MCF 10A (cell line): ENCODE measurements at regions of chr14 and their contacts with region 1.

Region 1: GRCh38 chr14:103910262-103910935 is 17.9 kb upstream of the TDRD9 start:
- DNase-seq: peak; percentile 96
- H3K4me3 Mint-ChIP-seq: peak overlapping the region; percentile 32
- H3K27ac Mint-ChIP-seq: no peak overlapping the region
- H3K4me1 Mint-ChIP-seq: peaks cover 7% of the 10 kb centered on the region
- H3K27me3 Mint-ChIP-seq: no peaks in the 10 kb centered on the region
- CTCF ChIP-seq: peak; percentile 88

Region 2: GRCh38 chr14:103483600-103483999 is 426.8 kb before region 1 on chr14:
- CTCF ChIA-PET with region 1: no interaction called
- POLR2A ChIA-PET with region 1: no interaction called
- intact Hi-C with region 1: no loop called
- DNase-seq: peak; percentile 97
- H3K4me3 Mint-ChIP-seq: no peak overlapping the region
- H3K27ac Mint-ChIP-seq: peak overlapping the region; percentile 42
- H3K4me1 Mint-ChIP-seq: peaks cover 14% of the 10 kb centered on the region
- H3K27me3 Mint-ChIP-seq: no peaks in the 10 kb centered on the region
- CTCF ChIP-seq: no peak

Region 3: GRCh38 chr14:103576371-103577024 is 333.9 kb before region 1 on chr14:
- CTCF ChIA-PET with region 1: interaction called, 3 read pairs
- POLR2A ChIA-PET with region 1: no interaction called
- intact Hi-C with region 1: loop called (anchors 1 kb)
- DNase-seq: peak; percentile 91
- H3K4me3 Mint-ChIP-seq: peak overlapping the region; percentile 13
- H3K27ac Mint-ChIP-seq: peak overlapping the region; percentile 82
- H3K4me1 Mint-ChIP-seq: peaks cover 17% of the 10 kb centered on the region
- H3K27me3 Mint-ChIP-seq: no peaks in the 10 kb centered on the region
- CTCF ChIP-seq: no peak

Region 4: DNA sequence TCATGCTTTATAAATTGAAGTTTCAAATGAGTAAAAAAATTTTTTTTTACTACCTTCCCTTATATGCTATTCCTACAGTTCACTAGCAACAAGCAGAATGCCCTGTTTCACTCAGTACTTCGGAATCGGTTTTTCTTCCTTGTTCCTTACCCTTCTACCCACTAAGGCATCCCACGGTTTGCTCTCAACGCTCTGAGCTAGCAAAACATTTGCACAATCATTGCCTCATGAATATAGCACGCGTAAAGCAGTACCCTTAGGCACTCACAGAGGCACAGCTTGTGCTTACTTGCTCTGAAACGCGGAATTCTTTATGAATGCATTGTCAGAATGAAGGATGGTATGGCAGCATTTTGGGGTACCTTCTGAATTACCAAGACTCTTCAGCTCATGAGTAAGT is 108.0 kb before region 1 on chr14:
- CTCF ChIA-PET with region 1: interaction called, 121 read pairs
- POLR2A ChIA-PET with region 1: interaction called, 11 read pairs
- intact Hi-C with region 1: no loop called
- DNase-seq: peak; percentile 67
- H3K4me3 Mint-ChIP-seq: no peak overlapping the region
- H3K27ac Mint-ChIP-seq: peak overlapping the region; percentile 36
- H3K4me1 Mint-ChIP-seq: peaks cover 30% of the 10 kb centered on the region
- H3K27me3 Mint-ChIP-seq: no peaks in the 10 kb centered on the region
- CTCF ChIP-seq: no peak

Region 5: DNA sequence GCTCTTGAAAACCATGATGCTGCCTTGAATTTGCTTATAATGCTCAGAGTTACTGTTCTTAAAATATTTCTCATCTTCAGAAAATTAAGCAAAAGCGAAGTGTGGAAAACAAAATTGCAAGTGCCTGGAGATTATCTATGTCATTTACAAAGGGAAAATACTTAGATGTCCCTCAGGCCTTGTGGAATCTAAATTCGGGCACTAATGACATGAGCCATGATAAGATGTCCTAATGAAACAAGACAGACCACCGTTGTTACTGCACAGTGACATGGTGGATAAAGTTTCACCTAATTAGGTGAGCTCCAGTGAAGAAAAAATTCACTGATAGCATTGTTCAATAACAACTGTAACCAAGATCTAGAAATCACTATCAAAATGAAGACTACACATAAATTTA is 93.4 kb before region 1 on chr14:
- CTCF ChIA-PET with region 1: interaction called, 13 read pairs
- POLR2A ChIA-PET with region 1: interaction called, 5 read pairs
- intact Hi-C with region 1: no loop called
- DNase-seq: no peak
- H3K4me3 Mint-ChIP-seq: no peak overlapping the region
- H3K27ac Mint-ChIP-seq: no peak overlapping the region
- H3K4me1 Mint-ChIP-seq: peaks cover 18% of the 10 kb centered on the region
- H3K27me3 Mint-ChIP-seq: no peaks in the 10 kb centered on the region
- CTCF ChIP-seq: no peak

Region 6: GRCh38 chr14:103899316-103899715 is 11.1 kb before region 1 on chr14:
- CTCF ChIA-PET with region 1: interaction called, 20 read pairs
- POLR2A ChIA-PET with region 1: interaction called, 7 read pairs
- intact Hi-C with region 1: no loop called
- DNase-seq: no peak
- H3K4me3 Mint-ChIP-seq: no peak overlapping the region
- H3K27ac Mint-ChIP-seq: no peak overlapping the region
- H3K4me1 Mint-ChIP-seq: peaks cover 9% of the 10 kb centered on the region
- H3K27me3 Mint-ChIP-seq: no peaks in the 10 kb centered on the region
- CTCF ChIP-seq: no peak

Region 7: GRCh38 chr14:103920981-103921854 is 10.8 kb after region 1 on chr14:
- CTCF ChIA-PET with region 1: interaction called, 18 read pairs
- POLR2A ChIA-PET with region 1: interaction called, 12 read pairs
- intact Hi-C with region 1: no loop called
- DNase-seq: peak; percentile 91
- H3K4me3 Mint-ChIP-seq: peak overlapping the region; percentile 91
- H3K27ac Mint-ChIP-seq: peak overlapping the region; percentile 91
- H3K4me1 Mint-ChIP-seq: no peaks in the 10 kb centered on the region
- H3K27me3 Mint-ChIP-seq: peaks cover 10% of the 10 kb centered on the region
- CTCF ChIP-seq: peak; percentile 97

Region 8: DNA sequence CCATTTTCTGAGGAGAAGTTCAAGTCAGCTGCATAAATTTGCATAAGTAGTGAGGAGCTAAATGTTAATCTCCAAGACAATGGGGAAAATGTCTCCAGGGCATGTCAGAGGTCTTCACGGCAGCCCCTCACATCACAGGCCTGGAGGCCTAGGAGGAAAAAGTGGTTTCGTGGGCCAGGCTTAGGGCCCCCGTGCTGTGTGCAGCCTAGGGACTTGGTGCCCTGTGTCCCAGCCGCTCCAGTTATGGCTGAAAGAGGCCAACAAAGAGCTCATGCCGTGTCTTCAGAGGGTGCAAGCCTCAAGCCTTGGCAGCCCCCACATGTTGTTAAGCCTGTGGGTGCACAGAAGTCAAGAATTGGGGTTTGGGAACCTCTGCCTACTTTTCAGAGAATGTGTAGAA is 73.8 kb after region 1 on chr14:
- CTCF ChIA-PET with region 1: interaction called, 9 read pairs
- POLR2A ChIA-PET with region 1: no interaction called
- intact Hi-C with region 1: loop called (anchors 2 kb)
- DNase-seq: no peak
- H3K4me3 Mint-ChIP-seq: no peak overlapping the region
- H3K27ac Mint-ChIP-seq: no peak overlapping the region
- H3K4me1 Mint-ChIP-seq: no peaks in the 10 kb centered on the region
- H3K27me3 Mint-ChIP-seq: peaks cover 14% of the 10 kb centered on the region
- CTCF ChIP-seq: no peak